K562 (cell line): ENCODE measurements at regions of chr1 and their contacts with region 1.

Region 1: GRCh38 chr1:28341591-28341990 is 12.8 kb downstream of the MED18 start:
- DNase-seq: no peak
- ATAC-seq: no peak
- H3K4me3 ChIP-seq: no peak overlapping the region
- H3K27ac ChIP-seq: no peak overlapping the region
- H3K4me1 ChIP-seq: peaks cover 0 to 7% of the 10 kb centered on the region in 2 experiments; a peak in 3 of 5 replicates
- H3K27me3 ChIP-seq: no peaks in the 10 kb centered on the region
- CTCF ChIP-seq: no peak
- EP300 ChIP-seq: no peak
- POLR2A ChIP-seq: no peak
- RAD21 ChIP-seq: no peak

Region 2: DNA sequence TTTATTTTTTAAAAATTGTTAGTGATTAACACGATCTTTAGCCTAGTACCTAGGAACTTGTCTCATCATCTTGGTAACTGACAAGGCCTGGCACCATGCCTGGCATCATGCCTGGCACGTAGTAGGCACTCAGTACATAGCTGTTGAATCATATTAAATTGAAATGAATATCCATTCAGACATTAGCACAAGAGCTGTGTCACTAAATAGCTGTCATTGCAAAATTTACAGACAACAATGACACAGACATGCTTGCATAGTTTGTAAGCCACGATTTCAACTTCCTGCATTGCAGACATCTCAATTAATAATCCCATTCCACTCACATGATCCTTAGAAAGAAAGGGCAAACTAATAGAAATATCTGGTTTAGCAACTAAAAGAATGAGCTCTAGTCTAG is 12.5 kb after region 1 on chr1:
- CTCF ChIA-PET with region 1: no interaction called
- POLR2A ChIA-PET with region 1: interaction called, 10 read pairs
- in situ Hi-C with region 1: no loop called
- intact Hi-C with region 1: no loop called
- DNase-seq: no peak
- ATAC-seq: no peak
- H3K4me3 ChIP-seq: no peak overlapping the region
- H3K27ac ChIP-seq: no peak overlapping the region
- H3K4me1 ChIP-seq: peaks cover 21 to 34% of the 10 kb centered on the region in 2 experiments
- H3K27me3 ChIP-seq: no peaks in the 10 kb centered on the region
- CTCF ChIP-seq: no peak
- EP300 ChIP-seq: no peak
- POLR2A ChIP-seq: no peak
- RAD21 ChIP-seq: no peak